T-cell (primary cell): ENCODE measurements at regions of chr2 and their contacts with region 1.

Region 1: DNA sequence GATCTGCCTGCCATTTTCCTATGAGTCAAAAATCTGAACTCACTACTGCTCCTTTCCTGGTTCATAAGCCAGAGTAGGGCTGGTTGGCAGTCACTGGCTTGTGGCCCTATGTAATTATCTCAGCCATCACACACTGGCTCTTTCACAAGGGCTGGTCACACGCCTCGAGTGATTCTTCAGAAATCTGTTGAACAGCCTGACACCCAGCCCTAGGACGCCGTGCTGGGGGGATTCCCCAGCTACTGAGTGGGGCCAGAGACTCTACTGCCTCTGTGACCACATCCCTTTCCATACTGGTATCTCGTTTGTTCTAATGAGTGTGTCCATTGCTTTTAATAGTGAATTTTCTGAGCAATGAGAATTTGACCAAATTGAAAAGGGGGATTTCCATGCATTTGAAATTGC is 45.8 kb upstream of the RBM44 start:
- DNase-seq: peak in 13 of 35 experiments; percentile 12 to 49 (median 22)
- ATAC-seq: peak in 2 of 4 experiments; percentile 43 to 64
- H3K4me3 ChIP-seq: no peak overlapping the region
- H3K4me3 Mint-ChIP-seq: no peak overlapping the region
- H3K27ac ChIP-seq: no peak overlapping the region
- H3K27ac Mint-ChIP-seq: peak overlapping the region in 1 of 2 donors; percentile 39
- H3K4me1 ChIP-seq: peaks cover 0 to 7% of the 10 kb centered on the region in 2 experiments
- H3K4me1 Mint-ChIP-seq: peaks cover 0 to 19% (median 13%) of the 10 kb centered on the region in 3 donors
- H3K27me3 ChIP-seq: no peaks in the 10 kb centered on the region
- H3K27me3 Mint-ChIP-seq: no peaks in the 10 kb centered on the region

Region 2: GRCh38 chr2:237717366-237718276 is 35.1 kb before region 1 on chr2:
- CTCF ChIA-PET with region 1: no interaction called
- POLR2A ChIA-PET with region 1: interaction called in 1 of 2 experiments, 10 read pairs
- DNase-seq: no peak
- ATAC-seq: no peak
- H3K4me3 ChIP-seq: no peak overlapping the region
- H3K4me3 Mint-ChIP-seq: no peak overlapping the region
- H3K27ac ChIP-seq: no peak overlapping the region
- H3K27ac Mint-ChIP-seq: no peak overlapping the region
- H3K4me1 ChIP-seq: peaks cover 2 to 18% of the 10 kb centered on the region in 2 experiments
- H3K4me1 Mint-ChIP-seq: peaks cover 76 to 88% (median 83%) of the 10 kb centered on the region in 3 donors
- H3K27me3 ChIP-seq: no peaks in the 10 kb centered on the region
- H3K27me3 Mint-ChIP-seq: no peaks in the 10 kb centered on the region

Region 3: DNA sequence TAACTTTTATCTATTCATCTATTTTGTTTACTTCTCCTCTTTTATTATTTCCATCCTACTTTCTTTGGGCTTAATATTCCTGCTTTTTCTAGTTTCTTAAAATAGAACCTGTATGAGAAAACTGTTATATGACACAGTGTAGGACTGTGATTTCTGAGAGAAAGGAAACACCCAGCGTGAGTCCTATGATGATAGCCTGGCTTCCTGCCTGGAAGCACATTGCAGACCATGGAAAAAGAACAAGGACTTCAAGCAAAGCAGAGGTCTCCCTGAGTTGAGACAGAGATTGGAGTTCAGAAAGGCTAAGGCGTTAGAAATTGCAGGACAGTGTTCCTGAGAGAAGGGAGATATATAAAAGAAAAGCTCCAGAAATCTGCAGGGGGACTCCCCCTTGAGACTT is 53.6 kb after region 1 on chr2:
- CTCF ChIA-PET with region 1: no interaction called
- POLR2A ChIA-PET with region 1: no interaction called
- DNase-seq: no peak
- ATAC-seq: no peak
- H3K4me3 ChIP-seq: no peak overlapping the region
- H3K4me3 Mint-ChIP-seq: no peak overlapping the region
- H3K27ac ChIP-seq: no peak overlapping the region
- H3K27ac Mint-ChIP-seq: no peak overlapping the region
- H3K4me1 ChIP-seq: no peaks in the 10 kb centered on the region
- H3K4me1 Mint-ChIP-seq: no peaks in the 10 kb centered on the region
- H3K27me3 ChIP-seq: no peaks in the 10 kb centered on the region
- H3K27me3 Mint-ChIP-seq: no peaks in the 10 kb centered on the region

Region 4: DNA sequence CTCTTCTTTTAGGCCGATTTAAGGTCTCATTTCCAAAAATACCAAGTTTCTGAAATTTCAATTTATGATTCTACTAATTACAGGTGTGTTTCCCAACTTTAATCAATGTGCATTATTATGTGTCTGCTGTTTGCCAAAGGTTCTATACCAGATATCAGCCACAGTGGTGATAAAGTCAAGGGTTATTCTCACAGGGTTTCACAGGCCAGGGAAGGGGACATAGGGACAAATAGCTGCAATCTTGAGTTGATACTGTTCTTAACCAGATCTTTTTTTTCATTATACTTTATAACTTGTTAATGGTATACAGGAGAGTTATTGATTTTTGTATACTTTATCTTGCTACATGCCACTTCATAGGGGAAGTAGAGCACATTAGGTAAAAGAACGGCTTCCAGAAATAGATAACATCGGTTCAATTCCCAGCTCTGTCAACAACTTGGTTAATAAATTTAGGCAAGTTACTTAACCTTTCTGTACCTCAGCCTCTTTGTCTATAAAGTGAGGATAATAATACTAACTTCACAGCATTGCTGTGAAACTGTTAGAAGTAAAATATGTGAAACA is 74.7 kb after region 1 on chr2:
- CTCF ChIA-PET with region 1: no interaction called
- POLR2A ChIA-PET with region 1: interaction called in 1 of 2 experiments, 13 read pairs
- DNase-seq: no peak
- ATAC-seq: no peak
- H3K4me3 ChIP-seq: no peak overlapping the region
- H3K4me3 Mint-ChIP-seq: no peak overlapping the region
- H3K27ac ChIP-seq: no peak overlapping the region
- H3K27ac Mint-ChIP-seq: no peak overlapping the region
- H3K4me1 ChIP-seq: no peaks in the 10 kb centered on the region
- H3K4me1 Mint-ChIP-seq: no peaks in the 10 kb centered on the region
- H3K27me3 ChIP-seq: no peaks in the 10 kb centered on the region
- H3K27me3 Mint-ChIP-seq: no peaks in the 10 kb centered on the region

Region 5: DNA sequence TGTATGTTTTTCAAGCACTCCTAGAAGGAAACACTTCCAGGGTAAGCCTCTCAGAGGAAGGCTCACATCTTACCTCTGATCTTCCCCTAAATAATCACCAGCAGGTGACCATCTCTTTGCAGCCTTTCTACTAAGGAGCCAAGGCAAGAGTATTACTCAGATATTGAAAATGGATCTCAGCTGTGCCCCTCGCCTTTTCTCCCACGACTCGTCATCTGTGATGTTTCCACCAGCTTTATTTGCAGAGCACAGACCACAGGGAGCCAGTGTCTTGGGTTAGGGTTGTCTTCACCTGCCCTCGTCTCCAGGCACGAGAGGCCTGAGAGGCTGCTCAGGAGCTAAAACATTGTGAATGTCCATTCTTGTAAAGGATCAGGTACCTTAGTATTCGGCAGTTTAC is 291.1 kb after region 1 on chr2:
- CTCF ChIA-PET with region 1: no interaction called
- POLR2A ChIA-PET with region 1: interaction called in 1 of 2 experiments, 10 read pairs
- DNase-seq: no peak
- ATAC-seq: no peak
- H3K4me3 ChIP-seq: no peak overlapping the region
- H3K4me3 Mint-ChIP-seq: no peak overlapping the region
- H3K27ac ChIP-seq: no peak overlapping the region
- H3K27ac Mint-ChIP-seq: no peak overlapping the region
- H3K4me1 ChIP-seq: no peaks in the 10 kb centered on the region
- H3K4me1 Mint-ChIP-seq: peaks cover 0 to 8% (median 0%) of the 10 kb centered on the region in 3 donors
- H3K27me3 ChIP-seq: no peaks in the 10 kb centered on the region
- H3K27me3 Mint-ChIP-seq: no peaks in the 10 kb centered on the region